ENCODE measurements at regions of chr7 and their contacts with region 1.

Region 1: GRCh38 chr7:74417419-74417971 is 36.2 kb upstream of the GTF2IRD1 start:
- DNase-seq: no peak
- H3K4me3 ChIP-seq: no peak overlapping the region
- H3K27ac ChIP-seq: no peak overlapping the region
- H3K4me1 ChIP-seq: peaks cover 3 to 12% (median 6%) of the 10 kb centered on the region in 4 donors
- H3K27me3 ChIP-seq: peaks cover 0 to 18% (median 0%) of the 10 kb centered on the region in 4 donors
- CTCF ChIP-seq: peak; percentile 88 to 97 (median 95)
- EP300 ChIP-seq: no peak
- POLR2A ChIP-seq: no peak

Region 2: DNA sequence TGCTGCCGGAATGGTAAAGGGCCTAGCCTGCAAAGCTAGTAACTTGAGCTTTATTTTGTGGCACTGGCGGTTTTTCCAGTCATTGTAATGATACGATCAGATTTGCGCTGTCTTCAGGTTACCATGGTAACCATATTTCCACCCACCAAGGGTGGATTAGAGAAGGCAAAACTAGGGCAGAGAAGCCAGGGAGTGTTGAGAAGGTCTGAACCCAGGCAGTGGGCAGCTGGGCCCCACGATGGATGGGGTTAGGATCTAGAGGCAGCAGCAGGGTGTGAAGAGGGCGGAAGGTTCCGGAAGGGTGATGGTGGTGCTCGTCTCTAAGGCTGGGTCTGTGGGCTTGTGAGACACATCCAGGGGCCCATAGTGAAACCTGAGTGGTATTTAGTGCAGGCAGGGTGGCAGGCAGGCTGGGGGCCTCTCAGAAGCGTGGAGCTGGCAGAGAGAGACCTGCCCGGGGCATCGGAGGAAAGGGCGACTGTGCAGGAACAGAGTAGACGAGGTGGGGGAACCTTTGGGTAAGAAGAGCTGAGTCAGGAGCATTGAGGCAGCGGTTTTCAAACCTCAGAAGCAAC is 152.1 kb after region 1 on chr7:
- intact Hi-C with region 1: loop called (anchors 5 kb)
- DNase-seq: no peak
- H3K4me3 ChIP-seq: no peak overlapping the region
- H3K27ac ChIP-seq: no peak overlapping the region
- H3K4me1 ChIP-seq: no peaks in the 10 kb centered on the region
- H3K27me3 ChIP-seq: no peaks in the 10 kb centered on the region
- CTCF ChIP-seq: no peak
- EP300 ChIP-seq: no peak
- POLR2A ChIP-seq: no peak